Activated CD4-positive, alpha-beta T cell treated with anti-CD3 and anti-CD28 coated beads for 36 hours (primary cell): ENCODE measurements at regions of chr16 and their contacts with region 1.

Region 1: DNA sequence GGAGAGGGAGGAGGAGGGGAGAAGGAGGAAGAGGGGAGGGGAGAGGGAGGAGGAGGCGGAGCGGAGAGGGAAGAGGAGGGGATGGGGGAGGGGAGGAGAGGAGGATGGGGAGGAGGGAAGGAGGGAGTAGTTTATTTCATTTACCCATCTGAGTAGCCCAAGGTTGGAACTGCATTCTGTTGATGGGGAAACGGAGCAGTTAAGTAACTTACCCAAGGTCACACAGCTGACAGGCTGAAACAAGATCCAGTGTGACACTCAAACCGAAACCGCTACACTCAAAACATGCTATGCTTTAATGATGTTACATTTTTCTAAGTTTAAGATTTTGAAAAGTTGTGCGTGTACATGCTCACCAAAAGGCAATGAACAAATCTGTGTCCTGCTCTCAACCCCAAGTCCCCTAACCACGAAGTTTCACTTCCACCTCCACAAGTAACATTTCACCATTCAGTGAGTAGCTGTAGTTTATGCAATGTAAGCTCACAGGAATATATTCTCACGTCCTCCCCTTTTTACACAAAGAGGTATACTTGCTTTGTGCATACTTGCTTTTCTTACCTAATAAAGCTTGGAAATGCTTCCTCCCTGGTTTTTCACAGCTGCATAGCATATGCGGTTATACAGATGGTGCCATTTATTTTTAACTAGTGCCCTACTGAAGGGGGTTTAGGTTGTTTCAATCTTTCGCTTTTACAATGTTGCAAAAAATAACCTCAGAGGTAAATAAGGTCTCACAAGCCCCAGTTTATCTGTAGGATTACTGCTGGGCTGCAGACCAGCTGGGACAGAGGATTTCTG is 275.3 kb downstream of the PARN start:
- DNase-seq: peak; percentile 74
- ATAC-seq: peak; percentile 94
- H3K4me3 Mint-ChIP-seq: peak overlapping the region; percentile 21
- H3K27ac Mint-ChIP-seq: no peak overlapping the region
- H3K4me1 Mint-ChIP-seq: peaks cover 10% of the 10 kb centered on the region
- H3K27me3 Mint-ChIP-seq: peaks cover 10% of the 10 kb centered on the region

Region 2: DNA sequence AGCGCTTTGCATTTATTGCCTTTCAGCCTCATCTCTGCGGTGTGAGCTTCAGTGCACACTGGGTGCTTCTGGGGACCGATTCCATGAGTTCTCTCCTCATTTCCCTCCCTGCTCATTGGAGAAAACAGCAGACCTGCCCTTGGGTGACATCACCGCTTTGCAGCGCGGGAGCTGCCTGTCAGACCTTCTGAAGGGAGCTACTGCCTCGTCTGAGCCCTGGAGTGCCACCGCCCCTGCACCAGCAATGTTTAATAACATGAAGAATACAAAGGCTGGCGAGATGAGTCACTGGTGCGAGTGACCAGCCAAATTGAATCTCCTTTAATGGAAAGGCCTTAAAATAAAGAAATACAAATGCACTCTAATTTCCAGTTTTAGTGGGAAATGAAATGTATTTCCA is 1520.8 kb before region 1 on chr16:
- CTCF ChIA-PET with region 1: no interaction called
- POLR2A ChIA-PET with region 1: no interaction called
- intact Hi-C with region 1: no loop called
- DNase-seq: no peak
- ATAC-seq: no peak
- H3K4me3 Mint-ChIP-seq: no peak overlapping the region
- H3K27ac Mint-ChIP-seq: no peak overlapping the region
- H3K4me1 Mint-ChIP-seq: peaks cover 3% of the 10 kb centered on the region
- H3K27me3 Mint-ChIP-seq: peaks cover 14% of the 10 kb centered on the region

Region 3: DNA sequence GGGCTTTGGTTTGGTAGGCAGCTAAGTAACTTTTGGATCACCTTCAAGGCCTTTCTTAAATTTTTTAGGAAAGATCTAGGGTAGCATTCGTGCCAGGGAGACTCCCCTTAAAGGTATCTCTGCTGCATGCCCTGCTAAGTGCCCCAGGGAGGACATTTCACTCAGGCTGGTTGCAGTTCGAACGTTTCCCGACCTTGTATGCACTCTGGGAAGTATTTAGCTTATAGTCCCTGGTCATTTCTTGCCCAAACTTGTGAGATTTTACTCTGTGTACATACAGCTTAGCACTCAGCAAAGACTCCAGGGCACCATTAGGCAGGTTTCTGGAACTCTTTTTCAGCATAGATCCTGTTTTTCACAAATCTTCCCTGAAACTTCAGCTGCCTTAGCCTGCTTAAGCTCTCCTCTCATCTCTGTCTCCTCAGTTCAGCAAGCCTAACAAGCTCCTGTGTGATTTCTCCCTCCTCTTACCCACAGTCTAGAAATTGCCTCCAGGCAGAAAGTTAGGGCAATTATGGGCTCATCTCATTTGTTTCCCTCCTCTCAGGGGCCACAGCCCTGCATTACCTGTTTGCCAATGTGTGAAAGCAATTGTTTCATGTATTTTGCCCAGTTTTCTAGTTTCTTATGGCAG is 199.1 kb before region 1 on chr16:
- CTCF ChIA-PET with region 1: no interaction called
- POLR2A ChIA-PET with region 1: no interaction called
- intact Hi-C with region 1: no loop called
- DNase-seq: no peak
- ATAC-seq: no peak
- H3K4me3 Mint-ChIP-seq: no peak overlapping the region
- H3K27ac Mint-ChIP-seq: no peak overlapping the region
- H3K4me1 Mint-ChIP-seq: no peaks in the 10 kb centered on the region
- H3K27me3 Mint-ChIP-seq: no peaks in the 10 kb centered on the region

Region 4: GRCh38 chr16:14285513-14286385 is 69.0 kb before region 1 on chr16:
- CTCF ChIA-PET with region 1: interaction called, 3 read pairs
- POLR2A ChIA-PET with region 1: no interaction called
- intact Hi-C with region 1: loop called in 1 of 2 experiments (anchors 1 kb)
- DNase-seq: peak; percentile 95
- ATAC-seq: peak; percentile 78
- H3K4me3 Mint-ChIP-seq: peak overlapping the region; percentile 80
- H3K27ac Mint-ChIP-seq: peak overlapping the region; percentile 84
- H3K4me1 Mint-ChIP-seq: peaks cover 13% of the 10 kb centered on the region
- H3K27me3 Mint-ChIP-seq: no peaks in the 10 kb centered on the region

Region 5: GRCh38 chr16:14300705-14301168 is 54.0 kb before region 1 on chr16:
- CTCF ChIA-PET with region 1: no interaction called
- POLR2A ChIA-PET with region 1: no interaction called
- intact Hi-C with region 1: loop called (anchors 2 to 5 kb)
- DNase-seq: peak; percentile 68
- ATAC-seq: peak; percentile 78
- H3K4me3 Mint-ChIP-seq: peak overlapping the region; percentile 63
- H3K27ac Mint-ChIP-seq: no peak overlapping the region
- H3K4me1 Mint-ChIP-seq: peaks cover 8% of the 10 kb centered on the region
- H3K27me3 Mint-ChIP-seq: peaks cover 15% of the 10 kb centered on the region

Region 6: GRCh38 chr16:14309001-14309886 is 45.5 kb before region 1 on chr16:
- CTCF ChIA-PET with region 1: no interaction called
- POLR2A ChIA-PET with region 1: no interaction called
- intact Hi-C with region 1: loop called in 1 of 2 experiments (anchors 5 kb)
- DNase-seq: peak; percentile 64
- ATAC-seq: peak; percentile 78
- H3K4me3 Mint-ChIP-seq: peak overlapping the region; percentile 50
- H3K27ac Mint-ChIP-seq: peak overlapping the region; percentile 75
- H3K4me1 Mint-ChIP-seq: peaks cover 37% of the 10 kb centered on the region
- H3K27me3 Mint-ChIP-seq: peaks cover 3% of the 10 kb centered on the region

Region 7: DNA sequence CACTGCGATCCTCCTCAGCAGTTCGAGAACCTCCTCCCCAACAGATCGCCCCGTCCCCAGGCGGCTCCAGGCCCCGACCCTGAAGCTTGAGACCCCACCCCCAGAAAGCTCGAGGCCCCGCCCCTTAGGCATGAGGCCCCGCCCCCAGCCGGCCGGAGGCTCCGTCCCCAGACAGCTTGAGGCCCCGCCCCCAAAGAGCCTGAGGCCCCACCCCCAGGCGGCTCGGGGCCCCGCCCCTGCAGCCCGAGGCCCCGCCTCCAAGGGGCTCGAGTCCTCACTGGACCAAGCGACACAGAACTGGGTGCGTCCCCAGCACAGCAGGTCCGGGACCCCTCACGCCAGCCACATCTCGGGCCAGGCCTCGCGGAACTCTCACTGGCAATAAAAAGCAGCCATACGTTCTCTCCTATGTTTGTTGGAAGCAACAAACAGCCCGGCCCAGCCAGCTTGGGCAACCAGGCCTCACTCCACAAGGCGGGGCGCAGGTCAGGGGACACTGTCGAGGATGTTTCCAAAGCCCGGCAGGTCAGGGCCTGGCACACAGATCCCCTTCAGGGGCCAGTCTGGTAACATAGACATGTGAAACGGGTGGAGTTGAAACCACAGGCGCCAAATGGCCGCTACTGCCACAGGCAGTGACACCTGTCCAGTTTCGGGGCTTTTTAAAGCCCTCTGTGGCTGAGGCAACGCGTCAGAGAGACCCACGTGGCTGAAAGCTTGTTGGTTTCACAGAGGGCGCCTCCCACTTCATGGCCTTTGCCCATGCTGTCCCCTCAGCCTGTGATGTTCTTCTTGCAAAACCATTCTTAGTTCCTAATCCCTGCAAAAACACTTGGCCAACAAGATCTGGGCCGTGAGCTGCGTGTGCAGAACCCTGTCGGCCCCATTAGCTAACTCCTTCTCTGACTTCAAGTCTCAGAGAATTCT is 51.1 kb after region 1 on chr16:
- CTCF ChIA-PET with region 1: no interaction called
- POLR2A ChIA-PET with region 1: no interaction called
- intact Hi-C with region 1: no loop called
- DNase-seq: peak; percentile 57
- ATAC-seq: peak; percentile 64
- H3K4me3 Mint-ChIP-seq: no peak overlapping the region
- H3K27ac Mint-ChIP-seq: no peak overlapping the region
- H3K4me1 Mint-ChIP-seq: peaks cover 2% of the 10 kb centered on the region
- H3K27me3 Mint-ChIP-seq: no peaks in the 10 kb centered on the region